ACHN (cell line): ENCODE measurements at regions of chr9 and their contacts with region 1.

Region 1: GRCh38 chr9:763692-764524 is 77.6 kb upstream of the DMRT1 start:
- DNase-seq: peak; percentile 90

Region 2: DNA sequence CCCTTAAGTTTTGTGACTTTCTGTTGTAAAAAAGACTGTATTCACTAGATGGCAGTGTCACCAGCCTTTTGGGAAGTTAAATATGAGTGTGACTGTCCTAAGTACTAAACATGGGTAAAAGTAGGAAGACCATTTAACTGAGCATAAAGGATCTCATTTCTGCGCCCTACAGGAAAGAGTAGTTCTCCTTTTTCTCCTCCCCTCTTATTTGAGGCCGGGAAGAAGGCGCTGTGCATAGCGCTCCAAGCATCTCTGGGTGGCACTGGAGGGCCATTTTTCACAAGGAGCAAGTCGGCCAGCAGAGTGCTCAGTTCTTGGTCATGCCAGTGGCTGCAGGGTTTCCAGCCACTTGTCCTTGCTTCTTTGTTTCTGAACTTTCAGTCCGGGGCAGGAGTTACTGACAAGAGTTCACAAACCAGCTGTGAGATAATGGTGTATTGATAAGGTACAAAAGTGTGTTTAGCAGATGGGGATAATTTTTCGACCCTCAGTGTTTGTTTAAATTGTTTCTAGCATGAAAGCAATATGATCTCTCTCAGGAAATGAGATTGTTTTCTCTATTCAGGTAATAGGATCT is 150.0 kb before region 1 on chr9:
- in situ Hi-C with region 1: loop called (anchors 25 kb)
- DNase-seq: peak; percentile 79

Region 3: GRCh38 chr9:893843-894420 is 130.0 kb after region 1 on chr9:
- in situ Hi-C with region 1: no loop called
- DNase-seq: peak; percentile 54